ENCODE measurements at regions of chr1 and their contacts with region 1.

Region 1: GRCh38 chr1:58515794-58516401 is 30.6 kb downstream of the OMA1 start:
- DNase-seq: peak; percentile 14 to 70
- ATAC-seq: peak in 1 of 2 experiments; percentile 65; a peak in 3 of 6 replicates
- H3K4me3 ChIP-seq: no peak overlapping the region
- H3K27ac ChIP-seq: no peak overlapping the region
- H3K4me1 ChIP-seq: no peaks in the 10 kb centered on the region
- CTCF ChIP-seq: peak; percentile 63
- EP300 ChIP-seq: no peak
- POLR2A ChIP-seq: no peak
- RAD21 ChIP-seq: peak; percentile 78 to 81

Region 2: GRCh38 chr1:58528518-58528917 is 12.6 kb after region 1 on chr1:
- CTCF ChIA-PET with region 1: interaction called, 29 read pairs
- POLR2A ChIA-PET with region 1: no interaction called
- DNase-seq: no peak
- ATAC-seq: no peak
- H3K4me3 ChIP-seq: no peak overlapping the region
- H3K27ac ChIP-seq: no peak overlapping the region
- H3K4me1 ChIP-seq: no peaks in the 10 kb centered on the region
- CTCF ChIP-seq: no peak
- EP300 ChIP-seq: no peak
- POLR2A ChIP-seq: no peak
- RAD21 ChIP-seq: no peak

Region 3: GRCh38 chr1:58539553-58539952 is 23.7 kb after region 1 on chr1:
- CTCF ChIA-PET with region 1: interaction called, 12 read pairs
- POLR2A ChIA-PET with region 1: no interaction called
- DNase-seq: no peak
- ATAC-seq: no peak
- H3K4me3 ChIP-seq: no peak overlapping the region
- H3K27ac ChIP-seq: no peak overlapping the region
- H3K4me1 ChIP-seq: 0 out of 3 replicates have a peak, but pooled peaks cover 5% of the 10 kb centered on the region
- CTCF ChIP-seq: no peak
- EP300 ChIP-seq: no peak
- POLR2A ChIP-seq: no peak
- RAD21 ChIP-seq: no peak